ENCODE measurements at regions of chr11 and their contacts with region 1.

Region 1: GRCh38 chr11:44556735-44557409 is 8.6 kb upstream of the CD82 start:
- DNase-seq: peak; percentile 85
- ATAC-seq: peak; percentile 85

Region 2: GRCh38 chr11:44505581-44506054 is 51.3 kb before region 1 on chr11:
- intact Hi-C with region 1: no loop called
- DNase-seq: no peak
- ATAC-seq: no peak

Region 3: GRCh38 chr11:44615913-44616791 is 59.3 kb after region 1 on chr11:
- intact Hi-C with region 1: loop called (anchors 2 kb)
- DNase-seq: peak; percentile 21
- ATAC-seq: no peak

Region 4: DNA sequence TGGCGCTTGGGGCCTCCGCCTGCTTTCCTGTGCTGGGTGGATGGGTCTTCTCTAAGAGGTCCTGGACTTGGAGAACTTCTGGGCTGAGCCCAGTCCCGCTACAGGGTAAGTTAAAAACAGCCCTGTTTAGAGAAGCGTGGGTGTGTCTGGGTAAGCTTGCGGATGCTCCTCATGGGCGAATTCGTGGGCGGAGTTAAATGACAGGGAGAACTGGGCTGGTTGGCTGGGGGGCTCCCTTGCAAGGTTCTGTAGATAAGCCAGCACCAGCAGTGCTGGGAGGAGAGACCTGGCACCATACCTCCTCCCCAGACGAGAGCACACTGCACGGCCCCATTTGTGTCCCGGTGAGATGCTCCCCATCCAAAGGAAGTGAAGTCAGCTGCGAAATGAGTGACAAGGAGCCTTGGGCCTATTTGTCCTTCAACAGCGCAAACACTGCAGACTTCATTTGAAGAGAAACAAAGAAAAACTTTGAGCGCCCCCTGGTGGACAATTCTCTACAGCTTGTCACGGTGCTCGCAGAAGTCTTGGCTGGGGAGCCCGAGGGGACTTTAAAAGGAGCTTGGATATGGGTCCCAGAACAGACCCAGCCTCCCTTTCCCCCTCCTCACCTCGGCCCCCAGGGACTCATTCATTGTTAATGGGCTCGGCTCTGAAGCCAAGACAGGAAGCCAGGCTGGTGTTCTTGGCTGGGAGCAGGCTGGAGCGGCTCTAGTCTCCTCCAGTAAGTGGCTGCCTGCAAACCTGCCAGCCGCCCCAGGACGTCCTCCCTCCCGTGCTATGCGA is 354.4 kb after region 1 on chr11:
- intact Hi-C with region 1: loop called (anchors 5 kb)
- DNase-seq: peak; percentile 95
- ATAC-seq: peak; percentile 90

Measured in sciatic nerve (tissue), 2 donors.